ENCODE measurements at regions of chr4 and their contacts with region 1.

Region 1: GRCh38 chr4:150322646-150323045 is 244.4 kb downstream of the DCLK2 start:
- DNase-seq: no peak
- ATAC-seq: no peak
- H3K4me3 ChIP-seq: no peak overlapping the region
- H3K27ac ChIP-seq: no peak overlapping the region
- H3K4me1 ChIP-seq: no peaks in the 10 kb centered on the region
- H3K27me3 ChIP-seq: no peaks in the 10 kb centered on the region
- CTCF ChIP-seq: no peak

Region 2: DNA sequence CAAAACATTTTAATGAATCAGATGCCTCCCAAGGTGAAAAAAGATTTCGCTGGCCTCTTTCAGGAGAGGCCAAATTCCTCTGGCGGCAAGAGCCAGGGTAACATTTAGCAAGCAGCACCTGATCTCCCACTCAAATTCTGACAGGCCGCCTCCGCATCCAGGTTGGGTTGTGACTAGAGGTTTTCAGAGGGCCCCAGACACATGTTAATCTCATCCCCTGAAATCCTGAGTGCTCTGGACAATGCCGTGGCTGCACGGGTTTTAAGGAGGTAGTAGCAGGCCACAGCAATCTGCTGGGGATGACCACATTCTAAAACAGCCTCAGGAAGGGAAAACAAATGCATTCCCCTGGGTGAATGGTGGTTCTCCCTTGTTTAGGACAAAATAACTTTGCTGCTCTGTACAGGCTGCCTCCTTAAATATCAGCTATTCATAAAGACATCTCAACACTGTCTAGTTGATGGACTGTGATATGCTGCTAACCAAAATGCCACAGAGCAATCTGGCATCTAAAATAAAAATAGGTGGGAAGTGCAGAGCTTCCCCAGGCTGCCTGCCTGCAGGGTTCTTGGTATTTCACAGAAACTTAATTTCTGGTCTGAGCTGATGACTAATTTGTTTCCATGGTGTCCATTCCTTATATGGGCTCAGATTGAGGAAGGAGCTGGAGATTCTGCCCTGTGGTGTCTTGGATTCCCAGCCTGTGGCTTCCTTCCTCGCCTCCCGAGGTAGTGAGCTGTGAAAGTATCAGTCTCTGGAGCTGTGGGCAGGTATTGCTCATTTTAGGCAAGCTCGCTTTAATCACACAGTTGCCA is 42.4 kb before region 1 on chr4:
- CTCF ChIA-PET with region 1: no interaction called
- POLR2A ChIA-PET with region 1: no interaction called
- intact Hi-C with region 1: no loop called
- DNase-seq: peak; percentile 28
- ATAC-seq: peak; percentile 69
- H3K4me3 ChIP-seq: no peak overlapping the region
- H3K27ac ChIP-seq: no peak overlapping the region
- H3K4me1 ChIP-seq: peaks cover 12% of the 10 kb centered on the region
- H3K27me3 ChIP-seq: no peaks in the 10 kb centered on the region
- CTCF ChIP-seq: no peak

Region 3: DNA sequence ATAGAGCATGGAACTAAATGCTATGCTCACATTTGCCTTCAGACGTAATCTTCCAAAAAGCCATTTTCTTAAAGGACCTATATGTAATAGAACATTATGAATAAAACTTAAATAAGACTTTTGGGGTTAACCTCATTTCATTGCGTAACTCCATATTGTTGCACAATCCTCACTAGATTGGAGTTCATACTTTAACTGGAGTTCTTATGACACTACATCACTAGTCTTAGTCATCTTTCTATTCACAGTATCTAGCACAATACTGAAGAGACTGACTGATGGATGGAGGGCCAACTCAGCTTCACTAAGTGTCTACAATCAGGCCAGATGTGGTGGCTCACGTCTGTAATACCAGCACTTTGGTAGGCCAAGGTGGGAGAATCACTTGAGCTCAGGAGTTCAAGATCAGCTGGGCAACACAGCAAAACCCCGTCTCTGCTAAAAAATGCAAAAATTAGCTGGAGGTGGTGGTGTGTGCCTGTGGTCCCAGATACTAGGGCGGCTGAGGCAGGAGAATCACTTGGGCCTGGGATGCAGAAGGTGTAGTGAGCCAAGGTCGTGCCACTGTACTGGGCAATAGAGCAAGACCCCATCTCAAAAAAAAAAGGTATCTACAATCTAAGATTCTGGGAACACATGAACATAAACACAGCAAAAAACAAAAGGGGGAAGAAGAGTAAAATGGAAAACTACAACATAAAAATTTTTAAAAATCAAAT is 178.5 kb after region 1 on chr4:
- CTCF ChIA-PET with region 1: no interaction called
- POLR2A ChIA-PET with region 1: interaction called, 16 read pairs
- intact Hi-C with region 1: no loop called
- DNase-seq: peak; percentile 69
- ATAC-seq: no peak
- H3K4me3 ChIP-seq: no peak overlapping the region
- H3K27ac ChIP-seq: no peak overlapping the region
- H3K4me1 ChIP-seq: 0 out of 2 replicates have a peak, but pooled peaks cover 5% of the 10 kb centered on the region
- H3K27me3 ChIP-seq: no peaks in the 10 kb centered on the region
- CTCF ChIP-seq: no peak